ENCODE measurements at regions of chr4 and their contacts with region 1.

Region 1: DNA sequence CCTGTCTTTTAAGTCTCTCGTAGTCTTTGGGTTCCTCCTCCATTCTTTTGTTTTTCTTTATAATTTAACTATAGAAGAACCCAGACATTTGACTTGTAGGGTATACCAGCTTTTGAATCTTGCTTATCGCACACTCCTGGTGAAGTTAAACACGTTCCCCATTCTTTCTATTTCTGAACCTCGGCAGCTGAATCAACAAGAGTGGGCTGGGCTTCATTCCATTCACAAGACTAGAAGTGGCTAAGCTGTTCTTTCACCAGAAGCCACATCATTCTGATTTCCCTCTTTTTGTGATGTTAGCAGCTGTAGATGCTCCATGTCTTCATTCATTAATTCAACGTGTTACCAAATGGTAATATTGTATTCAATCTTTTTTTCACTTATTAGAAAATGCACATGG is 167.9 kb downstream of the CORIN start:
- DNase-seq: peak in 2 of 5 donors; percentile 6 to 47
- H3K4me3 ChIP-seq: no peak overlapping the region
- H3K27ac ChIP-seq: no peak overlapping the region
- H3K4me1 ChIP-seq: no peaks in the 10 kb centered on the region
- H3K27me3 ChIP-seq: no peaks in the 10 kb centered on the region
- CTCF ChIP-seq: no peak

Region 2: GRCh38 chr4:47933840-47934239 is 263.9 kb after region 1 on chr4:
- intact Hi-C with region 1: loop called (anchors 10 kb)
- DNase-seq: peak in 2 of 5 donors; percentile 56 to 68
- H3K4me3 ChIP-seq: no peak overlapping the region
- H3K27ac ChIP-seq: no peak overlapping the region
- H3K4me1 ChIP-seq: peaks cover 0 to 4% (median 0%) of the 10 kb centered on the region in 3 donors
- H3K27me3 ChIP-seq: no peaks in the 10 kb centered on the region
- CTCF ChIP-seq: peak; percentile 53

Region 3: DNA sequence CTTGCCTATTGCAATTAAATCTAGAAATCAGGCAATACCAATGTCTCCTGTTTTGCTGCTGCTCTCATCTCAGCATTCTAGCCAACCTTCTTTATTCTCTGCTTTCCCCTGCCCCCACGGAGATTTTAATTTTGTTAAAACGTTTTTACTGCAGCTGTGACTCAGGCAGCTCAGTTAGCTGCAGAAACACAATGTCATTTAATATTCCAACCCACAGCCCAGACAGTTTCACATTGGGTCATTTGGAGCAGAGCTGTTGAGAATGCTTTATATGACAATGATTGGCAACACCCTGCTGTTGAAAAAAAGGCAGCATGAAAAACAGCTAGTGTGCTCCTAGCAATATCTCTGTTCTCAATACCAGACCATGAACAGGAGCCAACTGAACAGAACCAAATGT is 800.6 kb after region 1 on chr4:
- intact Hi-C with region 1: no loop called
- DNase-seq: no peak
- H3K4me3 ChIP-seq: no peak overlapping the region
- H3K27ac ChIP-seq: no peak overlapping the region
- H3K4me1 ChIP-seq: no peaks in the 10 kb centered on the region
- H3K27me3 ChIP-seq: no peaks in the 10 kb centered on the region
- CTCF ChIP-seq: no peak